Transverse colon (tissue), 4 donors: ENCODE measurements at regions of chr7 and their contacts with region 1.

Region 1: GRCh38 chr7:25894902-25895791 is 256.9 kb upstream of the NFE2L3 start:
- DNase-seq: peak; percentile 85
- H3K4me3 ChIP-seq: peak overlapping the region in 1 of 4 donors; percentile 34
- H3K27ac ChIP-seq: peak overlapping the region in 2 of 4 donors; percentile 45 to 61
- H3K4me1 ChIP-seq: peaks cover 0 to 11% (median 3%) of the 10 kb centered on the region in 4 donors
- H3K27me3 ChIP-seq: peaks cover 6% of the 10 kb centered on the region
- CTCF ChIP-seq: peak; percentile 71 to 78 (median 75)
- EP300 ChIP-seq: no peak
- POLR2A ChIP-seq: no peak

Region 2: GRCh38 chr7:26055241-26055640 is 160.1 kb after region 1 on chr7:
- in situ Hi-C with region 1: loop called in 3 of 4 experiments (anchors 5 to 10 kb)
- intact Hi-C with region 1: loop called (anchors 5 kb)
- DNase-seq: no peak
- H3K4me3 ChIP-seq: no peak overlapping the region
- H3K27ac ChIP-seq: no peak overlapping the region
- H3K4me1 ChIP-seq: no peaks in the 10 kb centered on the region
- H3K27me3 ChIP-seq: peaks cover 8% of the 10 kb centered on the region
- CTCF ChIP-seq: no peak
- EP300 ChIP-seq: no peak
- POLR2A ChIP-seq: no peak

Region 3: GRCh38 chr7:26061688-26062150 is 166.6 kb after region 1 on chr7:
- in situ Hi-C with region 1: loop called in 3 of 4 experiments (anchors 5 to 10 kb)
- intact Hi-C with region 1: loop called (anchors 5 kb)
- DNase-seq: peak; percentile 84
- H3K4me3 ChIP-seq: no peak overlapping the region
- H3K27ac ChIP-seq: no peak overlapping the region
- H3K4me1 ChIP-seq: peaks cover 0 to 11% (median 3%) of the 10 kb centered on the region in 4 donors
- H3K27me3 ChIP-seq: peaks cover 8% of the 10 kb centered on the region
- CTCF ChIP-seq: peak; percentile 80 to 88 (median 81)
- EP300 ChIP-seq: no peak
- POLR2A ChIP-seq: no peak

Region 4: DNA sequence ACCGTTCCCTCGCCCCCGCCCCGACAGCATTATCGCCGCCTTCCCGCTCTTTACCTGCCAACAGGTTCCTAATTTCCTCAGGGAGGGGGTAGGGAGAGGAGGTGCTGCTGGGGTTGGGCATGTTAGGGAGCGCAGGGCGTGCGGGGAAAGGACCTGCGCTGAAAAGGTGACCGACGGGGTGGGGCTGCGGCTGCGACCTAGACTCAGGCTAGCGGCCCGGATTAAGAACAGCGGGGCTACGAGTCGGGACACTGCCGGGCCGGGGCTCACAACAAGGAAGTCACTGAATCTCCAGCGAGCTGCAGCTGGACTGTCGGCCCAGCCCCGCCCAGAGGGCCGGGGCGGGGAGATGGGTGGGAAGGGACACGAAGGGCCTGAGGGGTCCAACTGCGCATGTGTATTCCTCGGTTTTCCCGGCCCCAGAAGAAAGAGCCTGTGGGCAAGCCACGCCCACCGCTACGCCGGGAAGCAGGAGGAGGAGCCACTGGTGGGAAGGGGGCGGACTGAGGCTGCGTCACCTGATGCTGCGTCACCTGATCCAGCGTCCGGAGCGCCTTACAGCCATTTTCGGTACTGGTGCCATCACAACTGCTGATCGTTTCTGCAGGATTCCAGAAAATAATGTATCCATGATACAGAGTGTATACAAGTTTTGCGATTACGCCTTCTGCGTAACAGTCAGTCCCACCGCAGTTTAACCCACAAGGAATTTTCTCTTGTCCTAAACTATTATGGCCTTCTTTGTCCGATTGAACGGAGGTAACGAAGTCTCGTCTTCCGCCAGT is 969.4 kb after region 1 on chr7 and contains the start of gene SKAP2:
- in situ Hi-C with region 1: loop called in 1 of 4 experiments (anchors 25 kb)
- intact Hi-C with region 1: no loop called
- DNase-seq: peak; percentile 99
- H3K4me3 ChIP-seq: peak within 1 kb of the TSS; percentile 66 to 71 (median 68)
- H3K27ac ChIP-seq: peak within 1 kb of the TSS; percentile 95 to 98 (median 96)
- H3K4me1 ChIP-seq: peaks cover 2 to 46% (median 20%) of the 10 kb centered on the region in 4 donors
- H3K27me3 ChIP-seq: no peaks in the 10 kb centered on the region
- CTCF ChIP-seq: no peak
- EP300 ChIP-seq: no peak
- POLR2A ChIP-seq: peak; percentile 99
- total RNA-seq, gene SKAP2: 2.6 to 35.2 (median 23.8) TPM